Astrocyte of the cerebellum (primary cell): ENCODE measurements at regions of chr4 and their contacts with region 1.

Region 1: DNA sequence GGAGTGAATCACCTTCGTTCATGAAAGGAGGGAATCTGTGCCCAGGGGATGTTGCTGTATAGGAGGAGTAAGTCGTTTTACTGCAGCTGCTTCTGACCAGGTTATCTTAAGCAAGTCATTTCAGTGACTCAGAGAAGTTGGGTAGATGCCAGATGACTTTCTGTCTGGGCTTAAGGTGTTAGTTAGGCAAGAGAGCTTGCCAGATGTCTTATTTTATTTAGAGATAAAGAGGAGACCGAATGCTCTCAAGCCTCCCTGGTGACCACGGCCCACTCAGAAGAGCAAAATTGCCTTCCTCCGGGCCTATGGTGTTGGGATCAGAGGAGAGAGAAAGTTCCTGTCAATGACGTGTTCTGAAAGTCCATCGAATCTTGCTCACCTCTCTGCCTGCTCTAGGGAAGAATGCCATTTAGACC is 16.3 kb upstream of the ZNF827 start:
- DNase-seq: peak; percentile 52
- H3K4me3 ChIP-seq: no peak overlapping the region
- CTCF ChIP-seq: no peak

Region 2: GRCh38 chr4:145898926-145899531 is 55.9 kb before region 1 on chr4:
- in situ Hi-C with region 1: no loop called
- DNase-seq: no peak
- H3K4me3 ChIP-seq: no peak overlapping the region
- CTCF ChIP-seq: no peak

Region 3: GRCh38 chr4:145909281-145909715 is 45.6 kb before region 1 on chr4:
- in situ Hi-C with region 1: no loop called
- DNase-seq: no peak
- H3K4me3 ChIP-seq: no peak overlapping the region
- CTCF ChIP-seq: no peak

Region 4: GRCh38 chr4:145988628-145989027 is 33.7 kb after region 1 on chr4:
- in situ Hi-C with region 1: loop called (anchors 5 kb)
- DNase-seq: no peak
- H3K4me3 ChIP-seq: no peak overlapping the region
- CTCF ChIP-seq: no peak

Region 5: DNA sequence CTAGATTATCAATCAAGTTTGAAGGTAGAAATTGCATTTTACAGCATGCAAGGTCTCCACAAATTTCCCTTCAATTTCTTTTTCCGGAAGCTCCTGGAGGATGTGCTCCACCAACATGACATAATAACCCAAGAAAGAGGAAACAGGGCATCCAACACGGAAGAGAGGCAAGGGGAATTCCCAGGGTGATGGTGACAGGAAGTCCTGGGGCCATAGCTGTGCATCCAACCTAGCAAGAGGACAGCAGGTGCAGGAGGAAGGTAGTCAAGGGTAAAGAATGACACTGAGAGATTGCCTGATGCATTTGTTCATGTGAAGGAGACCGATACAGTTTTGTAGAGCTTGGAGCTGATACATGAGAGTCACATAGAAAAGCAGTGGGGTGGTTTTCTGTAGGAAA is 104.9 kb after region 1 on chr4:
- in situ Hi-C with region 1: no loop called
- DNase-seq: no peak
- H3K4me3 ChIP-seq: no peak overlapping the region
- CTCF ChIP-seq: no peak